ENCODE measurements at regions of chr7 and their contacts with region 1.

Region 1: DNA sequence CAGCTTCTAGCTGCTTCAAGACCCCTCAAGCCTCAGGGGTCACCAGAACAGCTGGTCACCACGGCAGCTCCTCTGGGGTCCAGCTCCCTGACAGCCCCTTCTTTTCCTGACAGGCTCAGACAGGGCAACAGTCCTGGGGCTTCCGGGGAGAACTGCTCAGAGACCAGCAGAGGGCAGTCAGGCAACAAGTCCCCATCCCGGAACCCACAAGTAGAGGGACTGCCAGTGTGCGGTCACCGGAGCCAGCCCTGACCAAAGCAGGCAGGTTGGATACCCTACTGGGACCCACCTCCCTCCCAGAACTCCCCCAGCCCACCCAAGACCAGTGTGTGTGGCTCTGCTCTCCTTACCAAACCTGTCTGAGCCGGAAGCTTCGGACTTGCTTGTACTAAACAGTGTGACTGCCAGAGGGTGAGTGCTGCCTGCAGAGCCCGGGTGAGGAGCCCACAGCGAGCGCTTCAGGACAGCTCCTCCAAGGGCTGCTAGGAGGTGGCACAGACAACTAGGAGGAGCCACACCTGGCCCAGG is 40.3 kb downstream of the YKT6 start:
- DNase-seq: peak; percentile 78 to 88 (median 87)
- ATAC-seq: peak; percentile 80 to 86
- H3K4me3 ChIP-seq: no peak overlapping the region
- H3K27ac ChIP-seq: no peak overlapping the region
- H3K4me1 ChIP-seq: no peaks in the 10 kb centered on the region
- H3K27me3 ChIP-seq: no peaks in the 10 kb centered on the region

Region 2: DNA sequence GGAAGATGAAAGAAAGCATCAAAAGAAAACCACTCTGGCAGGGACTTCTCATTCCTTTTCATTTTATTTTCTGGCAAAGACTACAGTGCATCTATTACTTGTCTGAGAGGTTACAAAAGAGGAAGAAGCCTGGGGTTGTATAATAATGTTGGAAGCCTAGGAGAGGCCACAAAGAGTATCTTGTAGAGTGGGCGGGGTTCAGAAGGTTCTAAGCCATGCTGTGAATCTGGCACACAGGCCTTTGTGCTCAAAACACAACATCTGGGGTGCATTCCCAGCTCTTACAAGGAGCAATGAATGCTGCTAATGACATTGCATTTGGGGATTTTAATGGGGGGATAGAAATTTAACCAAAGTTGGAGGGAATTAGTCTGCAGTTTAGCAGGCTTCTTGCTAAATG is 1259.4 kb before region 1 on chr7:
- intact Hi-C with region 1: no loop called
- DNase-seq: no peak
- ATAC-seq: no peak
- H3K4me3 ChIP-seq: no peak overlapping the region
- H3K27ac ChIP-seq: no peak overlapping the region
- H3K4me1 ChIP-seq: no peaks in the 10 kb centered on the region
- H3K27me3 ChIP-seq: no peaks in the 10 kb centered on the region

Region 3: GRCh38 chr7:44307301-44307900 is 66.4 kb after region 1 on chr7:
- intact Hi-C with region 1: loop called in 1 of 4 experiments (anchors 5 kb)
- DNase-seq: peak in 2 of 3 donors; percentile 69 to 83
- ATAC-seq: peak; percentile 62 to 65
- H3K4me3 ChIP-seq: no peak overlapping the region
- H3K27ac ChIP-seq: peak overlapping the region; percentile 82
- H3K4me1 ChIP-seq: no peaks in the 10 kb centered on the region
- H3K27me3 ChIP-seq: no peaks in the 10 kb centered on the region

Region 4: DNA sequence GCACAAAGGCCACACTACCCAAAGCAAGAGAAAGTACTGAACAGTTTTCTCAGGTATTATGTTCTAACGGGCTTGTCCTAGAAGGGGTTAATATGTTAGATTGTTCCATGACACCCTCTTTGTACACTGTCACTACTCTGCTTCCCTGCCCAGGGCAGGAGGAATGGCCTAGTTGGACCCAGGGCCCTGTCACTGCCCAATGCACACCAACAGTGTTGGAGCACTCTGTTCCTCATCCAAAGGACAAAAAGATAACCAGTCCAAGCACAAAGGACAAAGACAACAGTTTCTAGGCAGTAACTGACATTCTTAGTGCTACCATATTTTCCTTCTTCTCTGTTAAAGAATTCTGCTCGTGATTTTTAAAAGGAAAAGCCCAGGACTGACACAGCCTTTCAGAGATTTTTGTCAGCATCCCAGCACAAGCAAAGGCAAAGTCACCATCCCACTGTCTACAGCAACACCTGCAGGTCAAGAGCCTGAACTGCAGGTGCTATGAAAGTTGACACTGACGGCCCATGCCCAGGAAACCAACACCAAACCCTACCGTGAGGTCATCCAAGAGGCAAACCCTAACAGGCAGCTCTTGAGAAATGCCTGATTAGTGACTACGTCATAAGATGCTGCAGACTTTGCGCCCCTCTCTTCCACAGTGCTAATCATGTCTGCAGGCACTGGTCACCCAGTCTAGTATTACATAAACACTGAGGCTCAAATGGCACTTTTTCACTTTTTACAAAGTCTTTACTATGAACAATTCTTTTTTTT is 236.2 kb after region 1 on chr7:
- intact Hi-C with region 1: loop called (anchors 2 to 10 kb)
- DNase-seq: peak; percentile 55 to 72 (median 59)
- ATAC-seq: peak; percentile 77 to 87
- H3K4me3 ChIP-seq: no peak overlapping the region
- H3K27ac ChIP-seq: peak overlapping the region; percentile 87
- H3K4me1 ChIP-seq: peaks cover 15% of the 10 kb centered on the region
- H3K27me3 ChIP-seq: no peaks in the 10 kb centered on the region

Region 5: DNA sequence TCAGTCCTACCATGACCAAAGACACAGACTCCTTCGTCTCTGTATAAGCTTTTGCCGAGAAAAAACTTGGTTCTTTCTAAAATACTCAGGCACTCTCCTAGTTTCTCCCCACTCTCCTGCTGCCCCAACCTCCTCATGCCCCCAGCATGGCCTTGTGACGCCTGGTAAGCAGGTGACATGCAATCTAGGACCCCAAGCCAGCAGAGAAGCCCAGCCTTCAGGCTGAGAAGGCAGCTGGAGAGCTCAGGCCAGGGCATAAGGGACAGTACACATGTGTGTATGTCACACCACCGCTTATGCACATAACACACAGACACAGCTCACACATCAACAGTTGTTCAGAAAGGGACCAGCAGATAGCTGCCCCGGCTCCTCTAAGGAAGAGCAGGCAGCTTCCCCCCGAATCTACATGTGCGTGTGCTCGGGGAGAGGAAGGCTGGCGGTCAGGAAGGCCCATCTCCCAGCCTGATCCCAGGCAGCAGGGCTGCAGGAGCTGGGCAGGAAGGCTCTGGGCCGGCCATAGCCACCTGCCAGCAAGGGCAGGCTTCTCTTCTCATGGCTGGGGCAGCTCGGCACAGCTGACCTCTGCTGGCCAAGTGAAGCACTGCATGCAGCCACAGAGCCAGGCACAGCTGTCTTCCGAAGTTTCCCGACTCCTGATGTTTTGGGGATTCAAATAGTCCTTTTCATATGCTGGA is 324.2 kb after region 1 on chr7:
- intact Hi-C with region 1: loop called in 2 of 4 experiments (anchors 5 to 10 kb)
- DNase-seq: peak; percentile 69 to 89 (median 87)
- ATAC-seq: peak; percentile 80 to 83
- H3K4me3 ChIP-seq: no peak overlapping the region
- H3K27ac ChIP-seq: peak overlapping the region; percentile 25
- H3K4me1 ChIP-seq: no peaks in the 10 kb centered on the region
- H3K27me3 ChIP-seq: no peaks in the 10 kb centered on the region